RWPE1 (cell line): ENCODE measurements at regions of chr2 and their contacts with region 1.

Region 1: DNA sequence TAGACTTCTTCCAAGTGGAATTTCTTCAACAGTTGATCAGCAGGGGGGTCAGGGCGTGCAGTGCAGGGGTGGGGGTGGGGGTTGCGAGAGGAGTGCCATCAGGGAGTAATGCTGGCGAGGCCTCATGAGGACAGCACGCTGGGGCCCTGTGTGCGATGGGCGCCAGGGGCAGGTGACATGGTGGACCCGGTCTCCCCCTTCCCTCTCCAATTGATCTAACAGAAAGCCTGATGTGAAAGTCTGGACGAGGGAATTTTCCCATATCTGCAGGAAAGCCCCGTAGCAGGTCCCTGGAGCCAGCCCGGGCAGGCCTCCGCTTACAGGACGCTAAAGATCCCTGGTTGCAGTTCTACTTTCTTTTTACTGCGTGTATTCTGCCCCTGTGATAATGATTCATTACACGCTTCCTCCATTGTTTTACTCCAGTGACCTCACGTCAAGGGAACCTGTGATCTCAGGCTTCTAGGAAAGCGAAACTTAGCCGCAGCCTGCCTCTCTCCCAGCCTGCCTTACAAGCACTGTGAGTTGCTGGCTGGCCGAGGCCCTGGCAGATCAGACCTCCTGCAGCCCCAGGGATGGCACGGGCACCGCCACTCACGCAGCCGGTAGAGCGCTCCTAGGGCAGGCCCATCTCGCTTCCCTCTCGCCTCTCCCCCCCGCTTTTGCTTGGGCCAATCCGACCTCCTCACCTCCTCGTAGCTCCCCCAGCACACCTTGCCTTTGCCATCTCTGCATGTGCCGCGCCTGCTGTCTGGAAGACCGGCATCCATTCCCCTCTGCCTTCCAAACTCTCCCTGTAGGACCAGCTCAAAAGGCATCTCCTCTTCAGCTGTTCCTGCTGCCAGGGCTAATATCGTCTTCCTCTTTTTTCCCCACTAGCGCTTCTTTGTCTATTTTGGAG is 19.2 kb downstream of the NEURL3 start:
- DNase-seq: peak; percentile 79
- H3K27ac ChIP-seq: peak overlapping the region; percentile 82
- CTCF ChIP-seq: no peak

Region 2: GRCh38 chr2:96145036-96145847 is 340.8 kb before region 1 on chr2 and contains the start of gene DUSP2:
- CTCF ChIA-PET with region 1: interaction called, 10 read pairs
- POLR2A ChIA-PET with region 1: no interaction called
- DNase-seq: peak; percentile 76
- H3K27ac ChIP-seq: peak within 1 kb of the TSS; percentile 37
- CTCF ChIP-seq: no peak